ENCODE measurements at regions of chr3 and their contacts with region 1.

Region 1: DNA sequence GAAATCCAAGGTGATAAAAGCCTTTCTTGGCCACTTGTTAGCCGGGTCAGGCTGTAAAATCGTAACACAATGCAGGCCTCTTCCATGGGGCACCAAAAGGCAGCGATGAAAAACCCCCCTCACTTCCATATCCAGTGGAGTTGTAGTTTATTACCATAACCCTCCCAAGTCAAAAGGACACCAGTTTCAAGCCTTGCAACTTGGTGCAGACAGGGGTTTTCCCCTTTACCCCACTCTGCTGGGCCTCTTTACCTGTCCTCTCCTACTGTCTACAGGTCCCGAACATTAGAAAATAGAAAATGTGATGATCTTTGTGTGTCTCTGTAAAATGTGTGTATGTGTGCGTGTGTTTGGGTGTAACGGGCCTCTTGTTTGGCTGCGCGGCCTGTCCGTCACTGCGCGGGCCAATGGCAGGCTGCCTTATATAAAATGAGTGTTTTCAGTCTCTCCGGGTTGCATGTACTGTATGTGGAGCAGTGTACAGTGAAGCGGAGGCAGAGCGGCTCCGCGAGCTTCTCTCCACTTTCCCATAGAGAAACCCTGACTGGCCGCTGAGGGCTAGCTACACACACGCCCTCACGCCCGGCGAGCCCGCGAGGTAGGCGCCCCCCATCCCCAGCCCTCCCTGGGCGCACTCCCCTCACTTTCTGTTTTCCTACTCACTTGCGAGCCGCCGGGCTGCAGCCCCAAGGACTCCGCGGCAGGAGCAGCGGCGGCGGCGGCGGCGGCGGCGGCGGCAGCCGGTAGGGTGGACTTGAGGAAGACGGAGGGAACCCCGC is at the start of gene BBX:
- DNase-seq: peak; percentile 92 to 98 (median 96)
- H3K4me3 ChIP-seq: peak within 1 kb of the TSS; percentile 70 to 88
- H3K4me3 Mint-ChIP-seq: peak within 1 kb of the TSS; percentile 97 to 99 (median 98)
- H3K27ac ChIP-seq: peak within 1 kb of the TSS; percentile 87
- H3K27ac Mint-ChIP-seq: peak within 1 kb of the TSS; percentile 88 to 98 (median 97)
- H3K4me1 ChIP-seq: peaks cover 29% of the 10 kb centered on the region
- H3K4me1 Mint-ChIP-seq: peaks cover 21 to 29% (median 25%) of the 10 kb centered on the region in 4 donors
- H3K27me3 ChIP-seq: no peaks in the 10 kb centered on the region
- H3K27me3 Mint-ChIP-seq: no peaks in the 10 kb centered on the region
- total RNA-seq, gene BBX: 93.9 to 99.1 TPM

Region 2: GRCh38 chr3:107429320-107430181 is 93.1 kb before region 1 on chr3:
- CTCF ChIA-PET with region 1: interaction called, 3 read pairs
- POLR2A ChIA-PET with region 1: interaction called, 5 read pairs
- intact Hi-C with region 1: loop called (anchors 1 kb)
- DNase-seq: peak; percentile 54 to 68 (median 61)
- H3K4me3 ChIP-seq: peak overlapping the region in 1 of 2 donors; percentile 51
- H3K4me3 Mint-ChIP-seq: peak overlapping the region; percentile 84 to 96 (median 90)
- H3K27ac ChIP-seq: no peak overlapping the region
- H3K27ac Mint-ChIP-seq: peak overlapping the region in 4 of 7 donors; percentile 17 to 64 (median 35)
- H3K4me1 ChIP-seq: peaks cover 18% of the 10 kb centered on the region
- H3K4me1 Mint-ChIP-seq: peaks cover 15 to 27% (median 19%) of the 10 kb centered on the region in 4 donors
- H3K27me3 ChIP-seq: no peaks in the 10 kb centered on the region
- H3K27me3 Mint-ChIP-seq: peaks cover 0 to 2% of the 10 kb centered on the region in 2 donors

Region 3: DNA sequence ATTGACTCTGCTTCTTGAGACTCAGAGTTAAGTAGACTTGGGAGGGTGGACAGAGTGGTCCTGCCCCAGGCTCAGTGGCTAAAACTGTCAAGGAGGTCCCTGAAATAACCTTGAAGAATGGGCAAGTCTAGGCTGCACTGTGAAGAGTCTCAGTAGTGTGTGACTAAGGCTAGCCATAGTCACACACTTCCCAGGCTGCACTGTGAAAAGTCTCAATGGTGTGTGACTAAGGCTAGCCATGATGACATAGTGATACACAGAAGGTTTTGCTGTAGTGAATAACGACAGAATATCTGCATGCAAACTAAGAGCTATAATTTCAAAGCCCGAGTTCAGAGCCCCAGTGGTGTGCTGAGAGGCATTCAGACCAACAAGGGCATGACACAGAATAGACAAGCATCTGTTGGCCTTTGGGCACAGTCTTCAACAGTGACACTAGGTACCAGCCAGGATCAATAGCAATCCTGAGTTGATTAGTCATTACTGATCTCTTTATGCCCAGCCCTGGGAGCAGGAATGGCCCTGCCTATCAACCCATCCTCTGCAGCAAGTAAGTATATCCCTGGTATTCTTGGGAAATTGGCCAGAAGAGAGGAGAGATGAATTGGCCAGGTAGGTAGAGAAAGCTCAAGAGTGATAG is 72.3 kb before region 1 on chr3:
- CTCF ChIA-PET with region 1: no interaction called
- POLR2A ChIA-PET with region 1: no interaction called
- intact Hi-C with region 1: no loop called
- DNase-seq: no peak
- H3K4me3 ChIP-seq: no peak overlapping the region
- H3K4me3 Mint-ChIP-seq: no peak overlapping the region
- H3K27ac ChIP-seq: no peak overlapping the region
- H3K27ac Mint-ChIP-seq: no peak overlapping the region
- H3K4me1 ChIP-seq: no peaks in the 10 kb centered on the region
- H3K4me1 Mint-ChIP-seq: no peaks in the 10 kb centered on the region
- H3K27me3 ChIP-seq: no peaks in the 10 kb centered on the region
- H3K27me3 Mint-ChIP-seq: peaks cover 0 to 1% of the 10 kb centered on the region in 2 donors

Region 4: DNA sequence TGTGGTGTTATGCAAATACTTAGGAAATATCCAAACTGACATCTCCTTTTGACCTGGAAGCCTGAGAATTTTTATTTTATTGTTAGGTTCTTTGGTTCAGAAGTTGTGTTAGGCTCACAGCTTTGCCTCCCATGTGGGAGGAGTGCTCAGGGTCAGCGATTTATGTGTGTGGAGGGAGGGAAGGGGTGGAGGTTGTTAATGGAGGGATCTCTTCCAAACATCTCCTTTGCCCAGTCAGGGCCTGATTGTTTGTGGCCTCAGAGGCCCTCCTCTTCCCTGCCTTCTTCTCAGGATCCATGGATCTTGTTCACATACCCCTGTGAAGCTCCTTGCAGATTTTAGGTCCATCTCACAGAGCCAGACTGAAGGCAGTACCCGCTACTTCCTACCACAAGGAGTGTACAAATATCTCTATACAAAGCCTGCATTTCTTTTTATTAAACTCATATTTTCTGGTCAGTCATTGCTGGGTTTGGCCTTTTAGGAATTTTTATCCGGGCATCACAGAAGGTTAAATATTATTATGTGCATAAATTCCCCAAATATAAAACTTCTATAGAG is 40.4 kb after region 1 on chr3:
- CTCF ChIA-PET with region 1: no interaction called
- POLR2A ChIA-PET with region 1: no interaction called
- intact Hi-C with region 1: no loop called
- DNase-seq: no peak
- H3K4me3 ChIP-seq: no peak overlapping the region
- H3K4me3 Mint-ChIP-seq: no peak overlapping the region
- H3K27ac ChIP-seq: no peak overlapping the region
- H3K27ac Mint-ChIP-seq: no peak overlapping the region
- H3K4me1 ChIP-seq: peaks cover 8% of the 10 kb centered on the region
- H3K4me1 Mint-ChIP-seq: peaks cover 28 to 59% (median 47%) of the 10 kb centered on the region in 4 donors
- H3K27me3 ChIP-seq: no peaks in the 10 kb centered on the region
- H3K27me3 Mint-ChIP-seq: no peaks in the 10 kb centered on the region

Region 5: GRCh38 chr3:107598926-107599771 is 76.5 kb after region 1 on chr3:
- CTCF ChIA-PET with region 1: no interaction called
- POLR2A ChIA-PET with region 1: interaction called, 8 read pairs
- intact Hi-C with region 1: loop called (anchors 1 kb)
- DNase-seq: peak; percentile 40 to 56 (median 47)
- H3K4me3 ChIP-seq: peak overlapping the region in 1 of 2 donors; percentile 9
- H3K4me3 Mint-ChIP-seq: peak overlapping the region; percentile 78 to 92 (median 84)
- H3K27ac ChIP-seq: peak overlapping the region; percentile 50
- H3K27ac Mint-ChIP-seq: peak overlapping the region; percentile 45 to 93 (median 82)
- H3K4me1 ChIP-seq: peaks cover 57% of the 10 kb centered on the region
- H3K4me1 Mint-ChIP-seq: peaks cover 46 to 71% (median 55%) of the 10 kb centered on the region in 4 donors
- H3K27me3 ChIP-seq: no peaks in the 10 kb centered on the region
- H3K27me3 Mint-ChIP-seq: no peaks in the 10 kb centered on the region

Measured in CD4-positive, alpha-beta memory T cell (primary cell).